ENCODE measurements at regions of chr1 and their contacts with region 1.

Region 1: DNA sequence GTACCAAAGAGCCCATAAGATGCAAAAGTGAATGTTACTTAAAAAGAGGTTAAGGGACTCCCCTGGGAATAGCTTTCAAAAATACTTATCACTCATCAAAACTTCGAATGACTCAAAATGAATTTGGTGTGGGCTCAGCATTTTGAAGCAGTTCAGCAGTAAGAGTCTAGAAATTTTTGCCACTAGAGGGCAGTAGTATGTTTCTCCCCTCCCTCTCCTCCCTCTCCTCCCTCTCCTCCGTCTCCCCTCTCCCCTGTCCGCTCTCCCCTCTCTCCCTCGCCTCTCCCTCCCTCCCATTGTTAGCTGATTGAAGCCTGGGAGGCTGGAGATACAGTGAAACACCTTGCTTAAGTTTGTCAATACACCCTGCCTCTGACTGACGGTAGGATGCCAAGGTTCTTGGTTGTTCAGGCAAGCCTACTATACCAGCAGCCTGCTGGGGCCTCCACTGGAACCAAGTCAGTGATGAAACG is 70.8 kb upstream of the TENT5C start:
- DNase-seq: no peak
- H3K4me3 ChIP-seq: no peak overlapping the region
- H3K27ac ChIP-seq: no peak overlapping the region
- H3K4me1 ChIP-seq: peaks cover 0 to 6% (median 0%) of the 10 kb centered on the region in 3 donors
- H3K27me3 ChIP-seq: peaks cover 0 to 4% (median 0%) of the 10 kb centered on the region in 4 donors
- CTCF ChIP-seq: peak; percentile 47 to 69 (median 60)
- POLR2A ChIP-seq: no peak

Region 2: GRCh38 chr1:117632269-117633067 is 97.4 kb after region 1 on chr1:
- intact Hi-C with region 1: no loop called
- DNase-seq: no peak
- H3K4me3 ChIP-seq: no peak overlapping the region
- H3K27ac ChIP-seq: no peak overlapping the region
- H3K4me1 ChIP-seq: no peaks in the 10 kb centered on the region
- H3K27me3 ChIP-seq: peaks cover 0 to 18% (median 0%) of the 10 kb centered on the region in 4 donors
- CTCF ChIP-seq: no peak
- POLR2A ChIP-seq: no peak

Region 3: GRCh38 chr1:117758444-117759316 is 223.6 kb after region 1 on chr1:
- intact Hi-C with region 1: loop called (anchors 5 kb)
- DNase-seq: no peak
- H3K4me3 ChIP-seq: peak overlapping the region in 3 of 4 donors; percentile 37 to 66 (median 37)
- H3K27ac ChIP-seq: peak overlapping the region in 1 of 4 donors; percentile 28
- H3K4me1 ChIP-seq: peaks cover 0 to 12% (median 9%) of the 10 kb centered on the region in 3 donors
- H3K27me3 ChIP-seq: peaks cover 0 to 10% (median 0%) of the 10 kb centered on the region in 4 donors
- CTCF ChIP-seq: peak; percentile 63 to 85 (median 74)
- POLR2A ChIP-seq: no peak

Region 4: DNA sequence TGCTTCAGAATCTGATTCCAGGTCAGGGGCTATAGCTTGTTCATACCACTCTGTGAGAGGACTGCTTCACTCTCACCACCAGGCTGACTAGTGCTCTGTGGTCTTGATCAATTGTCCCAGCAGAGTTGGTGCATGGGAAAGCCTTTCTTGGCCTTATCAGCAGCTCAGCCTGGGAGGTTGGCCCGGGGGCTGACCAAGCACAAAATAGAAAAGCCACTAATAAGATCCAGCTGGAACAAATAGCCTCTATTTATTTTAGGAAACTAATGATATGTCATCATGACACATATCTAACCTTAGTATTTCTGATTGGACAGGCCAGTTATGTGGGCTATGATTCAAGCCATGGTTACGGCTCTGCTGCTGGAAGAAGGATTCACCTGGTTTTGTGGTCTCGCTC is 260.2 kb after region 1 on chr1:
- intact Hi-C with region 1: no loop called
- DNase-seq: no peak
- H3K4me3 ChIP-seq: no peak overlapping the region
- H3K27ac ChIP-seq: no peak overlapping the region
- H3K4me1 ChIP-seq: no peaks in the 10 kb centered on the region
- H3K27me3 ChIP-seq: no peaks in the 10 kb centered on the region
- CTCF ChIP-seq: no peak
- POLR2A ChIP-seq: no peak

Region 5: DNA sequence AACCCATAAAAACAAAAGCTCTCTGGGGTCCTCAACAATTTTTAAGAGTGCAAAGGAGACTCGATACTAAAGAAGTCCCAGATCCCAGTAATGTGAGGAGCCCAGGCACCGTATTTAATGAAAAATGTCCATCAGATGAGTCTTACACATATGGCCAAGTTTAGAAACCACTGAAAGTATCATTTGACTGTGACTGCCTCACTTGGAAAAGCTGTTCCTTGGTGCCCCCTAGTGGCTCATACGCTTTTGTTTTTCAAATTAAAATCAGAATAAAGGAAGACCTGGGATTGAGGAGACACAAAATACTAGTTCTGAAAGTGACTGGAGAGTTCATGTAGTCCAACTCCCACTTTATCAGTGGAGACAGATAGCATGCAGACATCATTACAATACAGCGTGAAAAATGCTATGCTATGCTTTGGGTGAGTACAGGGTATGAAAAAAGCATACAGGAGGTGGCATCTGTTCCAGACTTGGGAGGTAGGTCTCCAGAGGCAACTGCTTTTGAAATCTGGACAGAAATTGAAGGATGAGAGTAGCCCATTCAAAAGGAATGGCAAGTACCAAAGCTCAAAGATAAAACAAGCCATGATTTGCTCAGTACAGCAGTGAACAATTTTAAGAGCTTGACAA is 360.6 kb after region 1 on chr1:
- intact Hi-C with region 1: loop called (anchors 10 kb)
- DNase-seq: no peak
- H3K4me3 ChIP-seq: no peak overlapping the region
- H3K27ac ChIP-seq: no peak overlapping the region
- H3K4me1 ChIP-seq: no peaks in the 10 kb centered on the region
- H3K27me3 ChIP-seq: no peaks in the 10 kb centered on the region
- CTCF ChIP-seq: peak; percentile 20 to 73 (median 62)
- POLR2A ChIP-seq: no peak